ENCODE measurements at regions of chr4 and their contacts with region 1.

Region 1: DNA sequence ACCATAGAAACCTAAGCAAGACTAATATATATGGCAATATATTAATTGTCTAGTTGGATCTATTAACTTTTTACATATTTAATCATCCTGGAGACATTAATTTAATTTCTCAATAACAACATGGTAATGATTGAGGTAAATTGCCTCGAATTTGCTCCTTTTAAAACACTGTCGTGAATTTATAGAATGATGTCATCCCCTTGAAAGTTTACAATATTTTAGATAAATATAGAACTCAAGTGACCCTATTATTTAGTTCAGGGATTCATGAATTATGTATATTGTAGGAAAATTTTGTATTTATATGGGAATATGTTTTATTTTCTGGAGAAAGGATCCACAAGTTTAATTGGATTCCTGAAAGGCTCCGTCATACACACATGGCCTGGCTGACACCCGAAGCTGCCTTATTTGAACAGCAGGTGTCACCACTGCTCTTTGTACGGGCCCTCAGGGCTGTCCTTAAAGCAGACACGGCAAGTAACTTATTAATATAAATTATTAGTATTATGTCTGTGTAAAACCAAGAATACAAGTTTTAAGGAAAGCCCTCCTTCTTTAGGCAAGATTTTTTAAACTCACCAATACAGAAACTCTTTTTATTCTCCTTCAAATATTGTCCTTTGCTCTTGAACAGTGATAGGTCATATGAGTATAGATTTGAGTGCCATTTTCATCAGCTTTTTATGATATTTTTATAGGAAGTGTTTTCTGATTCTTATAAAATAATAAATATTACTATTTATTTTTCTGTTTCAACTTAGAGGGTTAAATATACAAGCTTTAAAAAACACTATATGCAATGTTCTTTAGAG is 1.9 kb upstream of the PLRG1 start:
- DNase-seq: peak; percentile 68 to 75
- H3K4me3 ChIP-seq: no peak overlapping the region
- H3K27ac ChIP-seq: no peak overlapping the region
- H3K4me1 ChIP-seq: peaks cover 11% of the 10 kb centered on the region
- H3K27me3 ChIP-seq: no peaks in the 10 kb centered on the region
- CTCF ChIP-seq: peak; percentile 77

Region 2: DNA sequence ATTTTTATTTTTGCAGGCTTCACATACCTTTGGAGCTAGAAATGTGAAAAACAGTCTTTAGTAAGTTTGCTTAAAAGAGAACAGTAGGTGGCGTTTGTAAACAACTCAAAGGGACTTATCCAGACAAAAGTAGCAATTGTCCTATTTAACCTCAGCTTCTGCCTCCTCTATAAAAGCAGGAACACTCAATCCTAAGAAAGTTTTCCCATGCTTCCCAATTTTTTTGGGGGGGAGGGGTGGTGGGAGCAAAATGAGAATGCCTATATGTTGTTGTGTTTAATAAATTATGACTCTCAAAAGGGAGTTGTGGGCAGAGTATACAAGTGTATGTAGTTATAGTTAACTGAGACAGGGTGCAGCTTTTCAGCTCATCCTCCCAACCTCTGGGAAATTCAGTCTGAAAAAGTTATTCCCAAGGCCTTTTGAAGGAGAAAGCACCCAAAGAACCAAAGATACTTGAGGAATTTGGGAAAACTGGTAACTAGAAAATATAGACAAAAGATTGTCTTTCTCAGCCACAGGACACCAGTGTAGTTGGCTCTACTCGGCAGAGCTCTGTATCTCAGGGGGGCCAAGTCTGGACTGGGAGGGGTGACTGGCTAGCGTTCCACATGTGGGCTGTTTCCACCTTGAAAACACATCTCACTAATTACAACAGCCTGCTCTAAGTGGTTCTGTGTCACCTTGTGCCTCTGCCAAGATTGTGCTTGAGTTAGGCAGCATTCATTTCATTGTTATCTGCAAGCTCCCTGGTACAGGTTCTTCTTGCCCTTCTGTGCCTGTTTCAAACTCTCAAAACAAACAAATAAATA is 766.0 kb before region 1 on chr4:
- CTCF ChIA-PET with region 1: no interaction called
- POLR2A ChIA-PET with region 1: no interaction called
- intact Hi-C with region 1: loop called (anchors 10 kb)
- DNase-seq: no peak
- H3K4me3 ChIP-seq: no peak overlapping the region
- H3K27ac ChIP-seq: no peak overlapping the region
- H3K4me1 ChIP-seq: 0 out of 2 replicates have a peak, but pooled peaks cover 8% of the 10 kb centered on the region
- H3K27me3 ChIP-seq: no peaks in the 10 kb centered on the region
- CTCF ChIP-seq: peak; percentile 53; the same call in 1 of the 2 replicates

Region 3: GRCh38 chr4:154506253-154506652 is 45.8 kb before region 1 on chr4:
- CTCF ChIA-PET with region 1: interaction called, 9 read pairs
- POLR2A ChIA-PET with region 1: no interaction called
- intact Hi-C with region 1: loop called (anchors 1 kb)
- DNase-seq: no peak
- H3K4me3 ChIP-seq: peak overlapping the region; percentile 14; the same call in 1 of the 2 replicates
- H3K27ac ChIP-seq: peak overlapping the region; percentile 89
- H3K4me1 ChIP-seq: peaks cover 19% of the 10 kb centered on the region
- H3K27me3 ChIP-seq: no peaks in the 10 kb centered on the region
- CTCF ChIP-seq: peak; percentile 30; the same call in 1 of the 2 replicates

Region 4: GRCh38 chr4:154618708-154619315 is 66.7 kb after region 1 on chr4:
- CTCF ChIA-PET with region 1: interaction called, 13 read pairs
- POLR2A ChIA-PET with region 1: no interaction called
- intact Hi-C with region 1: loop called (anchors 1 kb)
- DNase-seq: peak; percentile 40 to 55
- H3K4me3 ChIP-seq: no peak overlapping the region
- H3K27ac ChIP-seq: no peak overlapping the region
- H3K4me1 ChIP-seq: no peaks in the 10 kb centered on the region
- H3K27me3 ChIP-seq: no peaks in the 10 kb centered on the region
- CTCF ChIP-seq: peak; percentile 76

Region 5: DNA sequence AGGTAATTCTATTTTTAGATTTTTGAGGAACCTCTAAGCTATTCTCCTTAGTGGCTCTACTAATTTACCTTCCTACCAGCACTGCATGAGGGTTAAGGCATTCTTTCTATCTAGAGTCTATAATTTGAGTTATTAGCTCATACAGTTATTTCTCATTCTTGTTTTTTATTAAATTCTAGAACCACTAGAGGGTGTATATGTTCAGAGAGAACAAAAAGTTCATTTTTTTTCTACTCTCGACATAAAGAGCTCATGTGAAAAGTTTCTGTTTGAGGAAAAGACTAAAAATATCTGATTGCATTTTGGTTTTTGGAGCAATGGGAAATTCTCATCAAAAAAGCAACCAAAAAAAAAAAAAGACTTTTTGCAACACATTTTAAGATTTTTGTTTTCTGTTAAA is 134.8 kb after region 1 on chr4:
- CTCF ChIA-PET with region 1: no interaction called
- POLR2A ChIA-PET with region 1: no interaction called
- intact Hi-C with region 1: no loop called
- DNase-seq: no peak
- H3K4me3 ChIP-seq: no peak overlapping the region
- H3K27ac ChIP-seq: no peak overlapping the region
- H3K4me1 ChIP-seq: no peaks in the 10 kb centered on the region
- H3K27me3 ChIP-seq: no peaks in the 10 kb centered on the region
- CTCF ChIP-seq: peak; percentile 50

Region 6: DNA sequence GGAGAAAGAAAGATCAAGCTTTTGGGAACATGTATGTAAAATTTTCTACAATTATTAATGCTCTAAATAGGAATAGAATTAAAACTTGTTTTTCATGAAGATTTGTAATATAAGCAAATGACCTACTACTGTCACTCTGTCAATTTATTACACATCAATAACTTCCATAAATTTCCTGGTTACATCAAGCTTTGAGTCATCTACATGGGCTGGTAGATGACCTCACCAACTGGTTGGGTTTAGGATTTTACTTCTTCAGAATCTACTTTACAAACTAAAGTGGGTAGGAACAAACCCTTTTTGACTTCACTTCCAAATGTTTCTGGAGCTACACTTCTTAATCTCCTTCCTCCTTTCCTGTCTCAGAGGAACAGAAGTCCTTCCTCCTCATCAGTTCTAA is 179.7 kb after region 1 on chr4:
- CTCF ChIA-PET with region 1: no interaction called
- POLR2A ChIA-PET with region 1: no interaction called
- intact Hi-C with region 1: no loop called
- DNase-seq: no peak
- H3K4me3 ChIP-seq: no peak overlapping the region
- H3K27ac ChIP-seq: no peak overlapping the region
- H3K4me1 ChIP-seq: no peaks in the 10 kb centered on the region
- H3K27me3 ChIP-seq: no peaks in the 10 kb centered on the region
- CTCF ChIP-seq: no peak

Region 7: GRCh38 chr4:155376387-155377268 is 824.5 kb after region 1 on chr4 and contains the start of gene MAP9:
- CTCF ChIA-PET with region 1: no interaction called
- POLR2A ChIA-PET with region 1: no interaction called
- intact Hi-C with region 1: loop called (anchors 10 kb)
- DNase-seq: peak; percentile 59 to 85
- H3K4me3 ChIP-seq: peak within 1 kb of the TSS; percentile 62
- H3K27ac ChIP-seq: no peak within 1 kb of the TSS
- H3K4me1 ChIP-seq: peaks cover 10% of the 10 kb centered on the region; the same call in 1 of the 2 replicates
- H3K27me3 ChIP-seq: no peaks in the 10 kb centered on the region
- CTCF ChIP-seq: no peak
- total RNA-seq, gene MAP9: 9.7 and 11.0 TPM in 2 replicates

Measured in PC-9 (cell line).